Dendritic cell treated with granulocyte-macrophage colony-stimulating factor and Interleukin-4, amounts not matched to agents 40 ng/mL and 50 ng/mL, for 4 days (primary cell): ENCODE measurements at regions of chr20 and their contacts with region 1.

Region 1: GRCh38 chr20:45373353-45374100 is 4.6 kb downstream of the TP53TG5 start:
- H3K4me3 Mint-ChIP-seq: peak overlapping the region; percentile 68
- H3K27ac Mint-ChIP-seq: peak overlapping the region; percentile 70
- H3K4me1 Mint-ChIP-seq: peaks cover 31% of the 10 kb centered on the region
- H3K27me3 Mint-ChIP-seq: peaks cover 8% of the 10 kb centered on the region

Region 2: DNA sequence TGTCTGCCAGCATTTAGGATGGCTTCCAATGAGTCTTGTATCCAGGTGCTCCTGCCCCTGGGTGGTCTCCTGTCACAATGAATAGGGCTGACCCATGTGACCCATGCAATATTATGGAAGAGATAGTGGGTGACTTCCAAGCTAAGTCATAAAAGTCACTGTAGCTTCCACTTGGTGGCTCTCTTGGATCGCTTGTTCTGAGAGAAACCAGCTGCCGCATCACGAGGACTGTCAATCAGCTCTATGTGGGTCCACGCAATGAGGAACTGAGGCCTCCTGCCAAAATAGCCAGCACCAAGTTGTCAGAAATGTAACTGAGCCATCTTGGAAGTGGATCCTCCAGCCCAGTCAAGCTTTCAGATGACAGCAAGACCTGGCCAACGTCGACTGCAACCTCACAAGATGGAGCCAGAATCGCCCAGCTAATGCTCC is 50.6 kb before region 1 on chr20:
- intact Hi-C with region 1: no loop called
- H3K4me3 Mint-ChIP-seq: no peak overlapping the region
- H3K27ac Mint-ChIP-seq: peak overlapping the region; percentile 41
- H3K4me1 Mint-ChIP-seq: peaks cover 13% of the 10 kb centered on the region
- H3K27me3 Mint-ChIP-seq: peaks cover 7% of the 10 kb centered on the region

Region 3: DNA sequence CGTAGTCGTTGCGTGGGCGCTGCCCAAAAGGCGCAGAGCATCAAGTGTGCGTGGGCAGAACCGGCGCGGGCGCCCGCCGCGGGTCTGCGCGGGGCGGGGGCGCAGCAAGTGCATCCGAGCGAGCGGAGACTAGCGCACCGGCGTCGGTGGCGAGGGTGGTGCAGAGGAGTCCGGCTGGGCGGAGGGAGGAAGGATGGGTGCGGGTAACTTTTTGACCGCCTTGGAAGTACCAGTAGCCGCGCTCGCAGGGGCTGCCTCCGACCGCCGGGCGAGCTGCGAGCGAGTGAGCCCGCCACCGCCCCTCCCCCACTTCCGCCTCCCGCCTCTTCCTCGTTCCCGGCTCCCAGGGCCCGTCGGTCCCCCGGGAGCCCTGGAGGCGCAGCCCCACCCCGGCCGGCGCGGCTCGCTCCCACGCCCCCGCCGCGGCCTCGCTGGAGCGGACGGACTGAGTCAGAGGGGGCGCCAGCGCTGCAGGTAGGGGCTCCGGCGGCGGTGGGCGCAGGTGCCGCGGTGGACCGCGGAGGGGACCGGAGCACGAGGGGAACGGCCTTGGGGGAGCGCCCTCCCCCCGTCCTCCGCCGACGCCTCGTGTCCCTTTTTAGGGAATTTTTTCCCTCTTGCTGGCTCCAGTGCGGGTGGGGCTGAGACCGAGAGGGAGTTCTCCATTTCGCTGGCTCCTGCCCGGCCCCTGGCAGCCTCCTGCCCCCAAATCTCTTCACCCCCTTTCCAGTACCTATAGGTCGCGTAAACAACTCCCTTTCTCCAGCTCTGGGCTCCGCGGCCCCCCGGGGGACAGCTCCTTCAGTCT is 32.9 kb after region 1 on chr20:
- intact Hi-C with region 1: loop called (anchors 5 kb)
- H3K4me3 Mint-ChIP-seq: peak overlapping the region; percentile 94
- H3K27ac Mint-ChIP-seq: peak overlapping the region; percentile 90
- H3K4me1 Mint-ChIP-seq: peaks cover 55% of the 10 kb centered on the region
- H3K27me3 Mint-ChIP-seq: peaks cover 10% of the 10 kb centered on the region

Region 4: DNA sequence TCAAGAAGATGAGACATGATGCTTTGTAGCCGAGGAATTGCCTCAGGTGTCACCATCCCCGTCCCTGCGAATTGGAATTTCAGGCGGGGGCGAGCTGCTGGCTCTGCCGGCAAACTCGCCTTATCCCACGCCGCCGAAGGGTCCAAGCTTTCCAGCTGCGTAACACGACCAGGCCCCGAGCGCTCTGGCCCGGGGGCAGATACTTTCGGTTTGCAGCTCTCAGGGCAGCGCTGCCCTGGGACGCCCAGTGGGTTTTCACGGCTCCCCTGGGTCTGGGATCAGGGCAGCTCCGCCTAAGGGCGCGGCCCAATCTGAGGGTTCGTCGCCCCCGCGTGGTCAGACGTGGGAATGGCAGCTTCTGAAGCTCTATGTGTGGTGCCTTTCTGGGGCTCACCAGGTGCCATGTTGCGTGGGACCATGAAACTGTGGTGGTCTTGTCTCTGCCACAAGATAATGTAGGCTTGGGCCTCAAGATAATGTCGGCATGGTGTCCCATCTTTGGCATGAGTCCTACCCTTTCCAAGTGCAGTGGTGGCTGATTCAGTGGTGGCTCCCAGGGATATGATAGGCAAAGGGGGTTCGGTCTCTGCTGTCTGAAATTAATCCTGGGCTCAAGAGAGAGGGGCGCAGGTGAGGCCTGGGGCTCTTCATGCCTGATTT is 63.3 kb after region 1 on chr20:
- intact Hi-C with region 1: loop called (anchors 1 kb)
- H3K4me3 Mint-ChIP-seq: peak overlapping the region; percentile 85
- H3K27ac Mint-ChIP-seq: peak overlapping the region; percentile 85
- H3K4me1 Mint-ChIP-seq: peaks cover 19% of the 10 kb centered on the region
- H3K27me3 Mint-ChIP-seq: peaks cover 5% of the 10 kb centered on the region